Ascending aorta (tissue), 2 donors: ENCODE measurements at regions of chr2 and their contacts with region 1.

Region 1: DNA sequence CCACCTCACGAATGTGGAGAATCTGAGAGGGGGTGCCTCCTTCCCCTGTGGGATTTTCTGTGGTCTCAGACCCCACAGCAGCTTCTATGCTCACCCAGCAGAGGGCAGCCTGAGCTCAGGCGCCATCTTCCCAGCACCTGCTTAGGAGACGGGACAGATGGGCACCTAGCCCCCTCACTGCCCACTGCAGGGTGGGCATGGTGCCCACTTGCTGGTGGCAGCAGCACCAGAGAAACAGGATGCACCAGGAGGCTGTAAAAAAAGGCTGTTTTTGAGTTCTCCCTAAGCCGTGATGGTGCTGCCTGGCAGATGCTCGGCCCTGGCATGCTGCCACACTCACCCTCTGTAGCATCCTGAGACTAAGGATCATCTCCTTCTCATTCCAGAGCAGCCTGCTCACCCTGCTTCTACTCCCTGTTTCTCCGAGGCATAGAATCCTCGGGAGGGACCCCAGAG is 19.1 kb upstream of the SLC20A1 start:
- DNase-seq: peak in 1 of 2 donors; percentile 78
- H3K4me3 ChIP-seq: peak overlapping the region; percentile 5 to 37
- H3K27ac ChIP-seq: peak overlapping the region; percentile 86 to 88
- H3K4me1 ChIP-seq: peaks cover 0 to 15% of the 10 kb centered on the region in 2 donors
- H3K27me3 ChIP-seq: no peaks in the 10 kb centered on the region
- CTCF ChIP-seq: peak; percentile 68 to 85 (median 72)

Region 2: DNA sequence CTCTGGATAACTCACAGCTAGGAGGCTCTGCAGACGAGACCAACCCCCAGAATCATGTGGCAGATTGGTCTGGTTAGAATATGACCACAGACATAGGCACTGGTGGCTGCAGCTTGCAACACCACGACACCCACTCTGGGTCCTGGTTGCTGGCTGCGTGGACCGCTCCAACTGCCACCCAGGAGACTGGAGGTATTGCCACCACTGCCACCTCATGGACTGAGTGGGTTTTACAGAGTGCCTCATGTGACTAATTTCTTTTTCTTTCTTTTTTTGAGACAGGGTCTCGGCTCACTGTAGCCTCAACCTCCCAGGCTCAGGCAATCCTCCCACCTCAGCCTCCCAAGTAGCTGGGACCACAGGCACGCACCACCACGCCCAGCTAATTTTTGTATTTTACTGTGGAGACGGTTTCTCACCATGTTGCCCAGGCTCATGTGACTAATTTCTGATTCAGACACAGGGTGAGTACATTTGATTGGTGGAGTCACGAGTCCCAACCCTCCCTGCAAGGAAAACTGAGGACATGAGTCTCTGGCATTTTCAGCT is 64.3 kb after region 1 on chr2:
- intact Hi-C with region 1: loop called (anchors 2 kb)
- DNase-seq: peak; percentile 21 to 78
- H3K4me3 ChIP-seq: peak overlapping the region in 1 of 2 donors; percentile 36
- H3K27ac ChIP-seq: no peak overlapping the region
- H3K4me1 ChIP-seq: no peaks in the 10 kb centered on the region
- H3K27me3 ChIP-seq: no peaks in the 10 kb centered on the region
- CTCF ChIP-seq: peak; percentile 58 to 76 (median 74)

Region 3: DNA sequence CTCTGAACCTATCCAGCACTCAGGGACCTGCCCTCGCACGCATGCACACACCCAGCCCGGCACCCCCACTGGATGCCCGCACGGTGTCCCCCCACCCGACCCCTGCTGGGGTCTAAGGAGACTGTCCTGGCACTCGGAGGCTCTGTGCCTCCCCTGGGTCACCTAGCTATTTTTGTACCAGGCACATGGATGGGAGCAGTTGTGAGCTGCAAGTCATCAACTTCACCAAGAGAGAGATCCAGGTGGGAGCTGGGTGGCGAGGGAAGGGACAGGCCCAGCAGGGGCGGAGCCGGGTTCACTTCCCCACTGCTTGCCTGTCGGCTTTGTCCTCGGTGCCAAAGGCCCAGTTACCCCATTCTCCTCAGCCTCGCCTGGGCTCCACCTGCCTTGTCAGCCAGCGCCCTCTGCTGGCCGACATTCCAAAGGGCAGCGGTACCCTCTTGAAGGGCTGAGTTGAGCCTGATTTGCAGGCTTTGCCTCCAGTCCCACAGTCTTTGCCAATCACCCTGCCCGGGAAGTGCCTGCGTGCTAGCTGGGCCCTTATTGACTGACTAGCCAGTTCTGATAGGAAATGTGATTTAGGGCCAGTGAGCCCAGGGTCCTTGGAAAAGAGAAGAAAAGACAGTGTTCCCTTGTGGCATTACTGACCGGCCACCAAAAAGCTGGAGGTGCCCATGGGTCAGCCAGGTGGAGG is 100.0 kb after region 1 on chr2:
- intact Hi-C with region 1: loop called (anchors 1 kb)
- DNase-seq: peak; percentile 61 to 93
- H3K4me3 ChIP-seq: no peak overlapping the region
- H3K27ac ChIP-seq: no peak overlapping the region
- H3K4me1 ChIP-seq: no peaks in the 10 kb centered on the region
- H3K27me3 ChIP-seq: no peaks in the 10 kb centered on the region
- CTCF ChIP-seq: peak; percentile 83 to 87 (median 86)